Caco-2 (cell line): ENCODE measurements at regions of chr10 and their contacts with region 1.

Region 1: GRCh38 chr10:13949844-13950595 is 363.3 kb downstream of the PRPF18 start:
- DNase-seq: no peak
- H3K4me3 ChIP-seq: no peak overlapping the region
- H3K4me3 Mint-ChIP-seq: no peak overlapping the region
- H3K27ac Mint-ChIP-seq: no peak overlapping the region
- H3K4me1 ChIP-seq: no peaks in the 10 kb centered on the region
- H3K4me1 Mint-ChIP-seq: no peaks in the 10 kb centered on the region
- H3K27me3 ChIP-seq: no peaks in the 10 kb centered on the region; the same call in 1 of the 2 replicates
- H3K27me3 Mint-ChIP-seq: peaks cover 8% of the 10 kb centered on the region
- CTCF ChIP-seq: no peak

Region 2: DNA sequence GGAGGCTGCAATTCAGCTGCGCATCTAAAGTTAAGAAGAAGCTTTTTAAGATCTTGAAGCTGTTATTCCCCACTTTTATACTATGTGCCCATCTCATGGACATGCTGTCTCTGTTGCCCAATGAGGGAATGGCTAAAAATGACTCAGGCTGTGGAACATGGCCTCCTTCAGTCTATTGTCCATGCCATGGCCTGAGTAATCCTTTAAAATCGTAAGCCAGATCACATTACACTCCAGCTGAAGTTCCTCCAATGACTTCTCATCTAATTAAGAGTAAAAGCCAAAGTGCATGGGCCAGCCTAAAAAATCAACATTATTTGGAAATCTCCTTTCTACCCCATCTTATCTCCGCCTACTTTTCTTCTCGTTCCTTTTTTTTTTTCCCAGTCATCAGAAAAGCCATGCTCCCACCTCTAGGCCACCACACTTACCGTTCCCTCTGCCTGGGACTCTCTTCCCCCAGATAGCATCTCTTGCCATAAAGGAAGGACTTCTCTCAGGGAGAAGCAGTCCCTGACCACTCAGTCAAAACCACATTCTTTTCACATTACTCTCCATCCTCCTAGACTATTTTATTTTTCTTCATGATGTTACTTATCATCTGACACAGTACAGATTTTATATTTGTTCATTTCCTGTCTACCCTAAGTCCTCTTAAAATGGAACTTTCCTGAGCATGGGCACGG is 25.8 kb before region 1 on chr10:
- CTCF ChIA-PET with region 1: no interaction called
- POLR2A ChIA-PET with region 1: no interaction called
- intact Hi-C with region 1: no loop called
- DNase-seq: no peak
- H3K4me3 ChIP-seq: no peak overlapping the region
- H3K4me3 Mint-ChIP-seq: no peak overlapping the region
- H3K27ac Mint-ChIP-seq: no peak overlapping the region
- H3K4me1 ChIP-seq: no peaks in the 10 kb centered on the region
- H3K4me1 Mint-ChIP-seq: no peaks in the 10 kb centered on the region
- H3K27me3 ChIP-seq: no peaks in the 10 kb centered on the region
- H3K27me3 Mint-ChIP-seq: peaks cover 6% of the 10 kb centered on the region
- CTCF ChIP-seq: no peak

Region 3: DNA sequence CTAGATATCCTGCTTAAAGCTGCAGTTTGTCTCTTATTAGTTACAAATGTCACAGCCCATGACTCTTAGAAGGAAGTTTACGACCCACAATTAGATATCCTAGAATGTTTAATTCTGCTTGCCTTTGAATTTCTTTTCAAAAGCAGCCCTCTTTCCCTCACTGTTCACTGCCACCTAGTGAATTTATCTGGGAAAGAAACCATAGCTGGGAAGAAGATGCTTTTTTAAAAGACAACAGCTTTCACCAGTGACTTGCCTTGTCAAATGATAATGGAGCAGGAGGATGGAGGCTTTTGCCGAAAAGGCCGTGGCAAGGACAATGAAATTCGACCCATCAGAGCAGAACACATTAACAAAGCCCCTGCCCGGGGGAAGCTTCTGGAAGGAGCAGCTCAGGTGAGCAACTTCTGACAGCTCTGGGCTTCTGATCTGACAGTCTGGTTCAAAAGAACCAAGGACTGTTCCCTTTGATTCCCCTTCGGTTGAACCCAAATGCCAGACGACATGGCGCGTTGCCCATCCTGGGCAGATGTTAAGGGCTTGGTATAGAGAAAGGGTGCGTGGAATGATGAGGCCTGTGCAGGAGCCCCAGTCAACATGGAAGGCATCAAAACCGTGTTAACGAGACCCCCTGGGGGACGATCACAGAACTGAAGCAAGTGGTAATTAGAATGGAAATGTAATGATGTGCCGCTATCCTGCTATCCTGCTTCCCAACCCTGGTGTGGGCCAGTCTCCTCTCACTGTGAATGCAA is 143.9 kb after region 1 on chr10:
- CTCF ChIA-PET with region 1: no interaction called
- POLR2A ChIA-PET with region 1: no interaction called
- intact Hi-C with region 1: loop called (anchors 5 kb)
- DNase-seq: peak in 1 of 2 experiments; percentile 51
- H3K4me3 ChIP-seq: no peak overlapping the region
- H3K4me3 Mint-ChIP-seq: no peak overlapping the region
- H3K27ac Mint-ChIP-seq: no peak overlapping the region
- H3K4me1 ChIP-seq: no peaks in the 10 kb centered on the region
- H3K4me1 Mint-ChIP-seq: no peaks in the 10 kb centered on the region
- H3K27me3 ChIP-seq: no peaks in the 10 kb centered on the region
- H3K27me3 Mint-ChIP-seq: no peaks in the 10 kb centered on the region
- CTCF ChIP-seq: peak; percentile 24 to 53